GM12878 (cell line): ENCODE measurements at regions of chr4 and their contacts with region 1.

Region 1: DNA sequence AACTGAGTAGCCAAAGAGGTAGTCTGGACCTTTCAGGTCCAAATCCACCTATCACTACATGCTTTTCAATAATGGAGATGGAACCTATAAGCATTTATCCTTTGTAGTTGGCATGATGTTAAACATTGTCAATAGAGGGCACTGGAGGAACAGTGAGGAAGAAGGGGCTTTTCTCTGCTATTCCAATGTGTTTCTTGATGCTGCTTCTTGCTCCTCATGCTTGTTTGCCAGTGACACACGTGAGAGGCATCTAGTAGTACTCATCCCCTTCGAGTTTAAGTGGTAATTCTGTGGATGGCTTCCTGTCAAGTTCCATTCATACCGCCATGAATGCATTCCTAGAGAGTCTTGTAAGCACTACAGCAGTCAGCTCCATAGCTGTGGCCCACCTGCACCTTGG is 84.0 kb downstream of the NAA11 start:
- DNase-seq: no peak
- ATAC-seq: peak; percentile 61
- H3K4me3 ChIP-seq: no peak overlapping the region
- H3K27ac ChIP-seq: no peak overlapping the region
- H3K4me1 ChIP-seq: no peaks in the 10 kb centered on the region
- H3K27me3 ChIP-seq: no peaks in the 10 kb centered on the region
- CTCF ChIP-seq: peak in 2 of 3 experiments; percentile 10 to 38; a peak in 2 of 6 replicates
- EP300 ChIP-seq: no peak
- POLR2A ChIP-seq: no peak
- RAD21 ChIP-seq: peak; percentile 47

Region 2: GRCh38 chr4:79049840-79050540 is 191.9 kb before region 1 on chr4:
- CTCF ChIA-PET with region 1: interaction called, 5 read pairs
- POLR2A ChIA-PET with region 1: no interaction called
- RAD21 ChIA-PET with region 1: interaction called, 47 read pairs
- SMC1A ChIA-PET with region 1: interaction called, 14 read pairs
- in situ Hi-C with region 1: no loop called
- intact Hi-C with region 1: no loop called
- DNase-seq: no peak
- ATAC-seq: no peak
- H3K4me3 ChIP-seq: no peak overlapping the region
- H3K27ac ChIP-seq: no peak overlapping the region
- H3K4me1 ChIP-seq: no peaks in the 10 kb centered on the region
- H3K27me3 ChIP-seq: no peaks in the 10 kb centered on the region; a peak in 1 of 4 replicates
- CTCF ChIP-seq: no peak
- EP300 ChIP-seq: no peak
- POLR2A ChIP-seq: no peak
- RAD21 ChIP-seq: no peak

Region 3: DNA sequence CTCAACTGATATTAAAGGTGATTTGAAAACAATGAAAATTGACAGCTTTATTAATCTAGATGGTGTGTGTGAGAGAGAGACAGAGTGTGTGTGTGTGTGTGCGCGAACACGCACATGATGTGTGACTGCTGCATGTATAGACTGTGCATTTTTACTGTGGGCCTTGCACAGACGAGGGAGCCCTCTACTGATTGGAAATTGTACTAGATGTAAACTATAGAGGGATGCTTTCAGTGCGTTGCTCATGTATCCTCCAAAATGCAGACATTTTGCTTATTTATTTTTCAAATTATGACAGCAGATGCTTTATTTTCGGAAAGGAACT is 334.5 kb after region 1 on chr4:
- CTCF ChIA-PET with region 1: interaction called, 9 read pairs
- POLR2A ChIA-PET with region 1: no interaction called
- RAD21 ChIA-PET with region 1: no interaction called
- SMC1A ChIA-PET with region 1: interaction called, 6 read pairs
- in situ Hi-C with region 1: no loop called
- intact Hi-C with region 1: loop called (anchors 10 kb)
- DNase-seq: no peak
- ATAC-seq: peak; percentile 88
- H3K4me3 ChIP-seq: no peak overlapping the region
- H3K27ac ChIP-seq: no peak overlapping the region
- H3K4me1 ChIP-seq: no peaks in the 10 kb centered on the region
- H3K27me3 ChIP-seq: no peaks in the 10 kb centered on the region
- CTCF ChIP-seq: peak; percentile 37 to 50 (median 49); a peak in 4 of 6 replicates
- EP300 ChIP-seq: no peak
- POLR2A ChIP-seq: no peak
- RAD21 ChIP-seq: peak; percentile 70